WTC11 (cell line): ENCODE measurements at regions of chr3 and their contacts with region 1.

Region 1: DNA sequence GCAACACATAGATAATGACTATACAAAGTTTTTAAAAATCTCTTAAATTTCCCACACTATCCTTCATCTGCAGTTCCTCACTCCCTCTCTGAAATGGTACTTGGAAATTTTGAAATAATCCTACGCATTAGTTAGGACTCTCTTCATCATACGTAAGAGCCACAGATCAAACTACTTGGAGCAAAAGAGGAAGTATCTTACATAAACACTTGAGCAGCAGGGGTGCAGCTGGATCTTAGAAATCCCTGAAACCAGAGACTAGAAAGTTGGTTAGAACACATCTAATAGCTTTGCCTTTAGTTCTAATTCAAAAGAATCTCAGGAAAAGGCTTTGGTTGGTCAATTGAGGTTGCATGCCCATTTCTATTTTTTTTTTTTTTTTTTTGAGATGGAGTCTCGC is 38.8 kb upstream of the ZNF445 start:
- DNase-seq: no peak
- ATAC-seq: no peak
- H3K4me3 Mint-ChIP-seq: no peak overlapping the region
- H3K27ac Mint-ChIP-seq: no peak overlapping the region
- H3K4me1 Mint-ChIP-seq: peaks cover 21% of the 10 kb centered on the region
- H3K27me3 Mint-ChIP-seq: peaks cover 8% of the 10 kb centered on the region; the same call in 1 of the 2 replicates
- CTCF ChIP-seq: no peak

Region 2: DNA sequence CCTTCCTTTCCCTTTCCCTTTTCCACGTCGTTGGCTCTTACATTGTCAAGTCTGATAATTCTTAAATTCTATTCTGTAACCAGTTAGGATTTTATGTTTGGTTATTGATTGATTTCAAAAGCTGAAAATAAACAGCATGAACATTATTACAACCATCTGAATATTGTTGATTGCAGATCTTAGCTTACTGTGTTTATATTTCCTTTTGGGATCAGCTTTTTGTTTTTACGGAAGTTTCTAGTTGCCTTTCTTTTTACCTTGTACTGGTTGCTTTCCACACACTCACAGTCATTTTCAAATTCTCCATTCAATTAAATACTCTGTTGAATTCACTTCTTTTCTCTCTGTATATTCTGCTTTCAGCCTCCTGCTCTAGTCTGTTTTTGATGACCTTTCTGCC is 148.9 kb after region 1 on chr3:
- CTCF ChIA-PET with region 1: interaction called, 3 read pairs
- POLR2A ChIA-PET with region 1: interaction called, 10 read pairs
- DNase-seq: no peak
- ATAC-seq: no peak
- H3K4me3 Mint-ChIP-seq: no peak overlapping the region
- H3K27ac Mint-ChIP-seq: no peak overlapping the region
- H3K4me1 Mint-ChIP-seq: no peaks in the 10 kb centered on the region
- H3K27me3 Mint-ChIP-seq: no peaks in the 10 kb centered on the region
- CTCF ChIP-seq: no peak